Activated T-helper 1 cell treated with anti-CD3 and anti-CD28 coated beads, Interleukin-12 subunit alpha, Interleukin-12 subunit beta, Interleukin-2, Interleukin-4 antibody, amounts not matched to agents 30 ng/mL and 10 ng/mL and 1 ng/mL, durations not matched to agents 14 hours and 24 hours and 36 hours (primary cell): ENCODE measurements at regions of chr4 and their contacts with region 1.

Region 1: DNA sequence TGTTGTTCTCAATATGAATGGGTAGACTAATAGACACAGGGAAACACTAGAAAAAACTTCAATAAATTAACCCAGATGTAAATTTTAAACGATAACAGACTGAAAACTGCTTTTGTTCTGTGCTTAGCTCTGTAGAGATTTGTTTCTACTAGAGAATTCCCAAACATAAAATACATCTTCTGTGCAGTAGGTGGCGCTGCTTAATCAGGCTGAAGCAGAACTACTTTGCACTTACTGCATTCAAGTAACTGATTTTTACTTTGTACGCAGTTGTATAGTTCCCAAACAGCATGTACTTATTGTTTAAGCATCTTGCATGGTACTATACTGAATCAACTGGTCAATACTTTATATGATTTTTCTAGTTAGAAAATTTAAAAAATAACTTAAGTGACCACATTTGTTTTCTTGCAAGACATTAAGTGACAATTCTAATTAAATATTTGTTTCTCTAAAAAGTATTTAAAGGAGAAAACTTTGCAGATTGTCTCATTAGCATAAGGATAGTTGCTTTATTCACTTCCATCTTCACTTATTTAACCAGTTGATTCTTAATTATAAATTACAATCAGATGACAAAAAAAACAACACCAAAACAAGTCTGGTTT is 490.6 kb downstream of the IL15 start:
- DNase-seq: peak; percentile 27
- H3K4me3 Mint-ChIP-seq: no peak overlapping the region
- H3K27ac Mint-ChIP-seq: no peak overlapping the region
- H3K4me1 Mint-ChIP-seq: peaks cover 18% of the 10 kb centered on the region
- H3K27me3 Mint-ChIP-seq: no peaks in the 10 kb centered on the region

Region 2: GRCh38 chr4:140851032-140851636 is 1275.9 kb before region 1 on chr4:
- intact Hi-C with region 1: no loop called
- DNase-seq: peak; percentile 3
- H3K4me3 Mint-ChIP-seq: no peak overlapping the region
- H3K27ac Mint-ChIP-seq: no peak overlapping the region
- H3K4me1 Mint-ChIP-seq: no peaks in the 10 kb centered on the region
- H3K27me3 Mint-ChIP-seq: peaks cover 2% of the 10 kb centered on the region

Region 3: GRCh38 chr4:141307241-141307689 is 819.7 kb before region 1 on chr4:
- intact Hi-C with region 1: loop called (anchors 5 kb)
- DNase-seq: peak; percentile 49
- H3K4me3 Mint-ChIP-seq: no peak overlapping the region
- H3K27ac Mint-ChIP-seq: no peak overlapping the region
- H3K4me1 Mint-ChIP-seq: no peaks in the 10 kb centered on the region
- H3K27me3 Mint-ChIP-seq: peaks cover 2% of the 10 kb centered on the region

Region 4: DNA sequence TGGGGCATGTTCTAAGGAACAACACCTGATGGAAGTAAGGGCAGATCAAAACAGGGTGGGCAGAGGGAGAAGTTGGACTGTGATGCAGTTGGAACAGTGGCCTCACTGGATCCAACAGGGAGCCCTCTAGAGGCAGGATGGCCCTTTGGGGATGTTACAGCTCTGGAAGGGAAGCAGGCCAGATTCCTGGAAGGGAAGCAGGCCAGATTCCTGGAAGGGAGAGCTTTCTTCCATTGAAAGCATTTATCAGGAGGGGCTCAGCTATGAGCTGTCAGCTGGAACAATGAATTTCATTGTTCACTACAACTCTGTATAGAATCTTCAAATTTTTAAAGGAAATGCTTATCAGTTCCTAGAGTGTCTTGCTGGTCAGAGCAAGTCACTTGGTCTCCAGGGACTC is 472.9 kb before region 1 on chr4:
- intact Hi-C with region 1: no loop called
- DNase-seq: no peak
- H3K4me3 Mint-ChIP-seq: no peak overlapping the region
- H3K27ac Mint-ChIP-seq: no peak overlapping the region
- H3K4me1 Mint-ChIP-seq: no peaks in the 10 kb centered on the region
- H3K27me3 Mint-ChIP-seq: peaks cover 2% of the 10 kb centered on the region

Region 5: DNA sequence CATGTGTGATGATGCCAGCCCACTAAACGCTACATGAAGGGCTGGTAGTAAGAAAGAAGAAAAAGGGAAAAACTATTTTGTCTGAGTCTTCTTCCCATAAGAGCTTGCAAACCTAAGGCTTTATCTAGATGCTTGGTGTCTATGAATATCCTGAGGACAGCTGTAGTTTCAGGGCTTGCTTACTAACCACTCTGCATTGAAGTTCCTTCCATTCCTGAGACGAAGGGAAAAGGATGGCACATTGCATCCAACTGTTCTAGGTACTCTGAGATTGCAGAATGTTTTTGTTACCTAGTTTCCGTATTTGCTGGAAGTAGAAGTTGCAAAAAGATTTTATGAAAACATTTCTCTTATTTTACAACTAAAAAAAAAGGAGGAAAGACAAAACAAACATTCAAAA is 54.0 kb after region 1 on chr4:
- intact Hi-C with region 1: no loop called
- DNase-seq: no peak
- H3K4me3 Mint-ChIP-seq: no peak overlapping the region
- H3K27ac Mint-ChIP-seq: no peak overlapping the region
- H3K4me1 Mint-ChIP-seq: no peaks in the 10 kb centered on the region
- H3K27me3 Mint-ChIP-seq: no peaks in the 10 kb centered on the region

Region 6: GRCh38 chr4:142282870-142283431 is 156.0 kb after region 1 on chr4:
- intact Hi-C with region 1: loop called (anchors 5 kb)
- DNase-seq: no peak
- H3K4me3 Mint-ChIP-seq: no peak overlapping the region
- H3K27ac Mint-ChIP-seq: no peak overlapping the region
- H3K4me1 Mint-ChIP-seq: peaks cover 5% of the 10 kb centered on the region
- H3K27me3 Mint-ChIP-seq: no peaks in the 10 kb centered on the region

Region 7: DNA sequence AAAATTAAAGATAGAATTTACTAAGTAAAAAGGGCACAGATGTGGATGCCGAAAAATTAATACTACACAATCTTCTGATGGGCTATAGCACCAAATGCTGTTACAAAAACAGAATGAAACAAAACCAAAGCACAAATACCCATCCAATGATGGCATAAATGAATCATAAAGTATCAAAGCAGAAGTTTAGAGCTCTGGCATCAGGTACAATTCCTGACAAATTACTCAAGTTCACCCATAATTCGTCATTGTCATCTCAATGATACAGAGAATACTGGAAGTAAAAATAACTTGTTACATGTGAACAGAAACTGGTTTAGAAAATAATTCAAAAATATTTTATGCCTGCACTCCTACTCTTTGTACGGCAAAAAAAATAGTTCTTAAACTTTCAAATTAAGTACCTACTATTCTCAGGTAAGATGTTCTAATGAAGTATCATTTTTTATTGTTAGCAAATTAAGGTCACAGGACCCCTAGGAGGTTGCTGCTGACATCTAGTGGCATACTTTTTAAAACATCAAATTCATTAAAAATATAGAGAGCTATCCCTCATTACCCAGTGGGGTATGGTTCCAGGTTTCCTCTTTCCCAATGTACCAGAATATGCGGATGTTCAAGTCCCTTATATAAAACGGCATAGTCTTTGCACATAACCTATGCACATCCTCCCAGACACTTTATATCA is 593.0 kb after region 1 on chr4:
- intact Hi-C with region 1: loop called (anchors 1 kb)
- DNase-seq: no peak
- H3K4me3 Mint-ChIP-seq: no peak overlapping the region
- H3K27ac Mint-ChIP-seq: no peak overlapping the region
- H3K4me1 Mint-ChIP-seq: peaks cover 7% of the 10 kb centered on the region
- H3K27me3 Mint-ChIP-seq: no peaks in the 10 kb centered on the region

Region 8: DNA sequence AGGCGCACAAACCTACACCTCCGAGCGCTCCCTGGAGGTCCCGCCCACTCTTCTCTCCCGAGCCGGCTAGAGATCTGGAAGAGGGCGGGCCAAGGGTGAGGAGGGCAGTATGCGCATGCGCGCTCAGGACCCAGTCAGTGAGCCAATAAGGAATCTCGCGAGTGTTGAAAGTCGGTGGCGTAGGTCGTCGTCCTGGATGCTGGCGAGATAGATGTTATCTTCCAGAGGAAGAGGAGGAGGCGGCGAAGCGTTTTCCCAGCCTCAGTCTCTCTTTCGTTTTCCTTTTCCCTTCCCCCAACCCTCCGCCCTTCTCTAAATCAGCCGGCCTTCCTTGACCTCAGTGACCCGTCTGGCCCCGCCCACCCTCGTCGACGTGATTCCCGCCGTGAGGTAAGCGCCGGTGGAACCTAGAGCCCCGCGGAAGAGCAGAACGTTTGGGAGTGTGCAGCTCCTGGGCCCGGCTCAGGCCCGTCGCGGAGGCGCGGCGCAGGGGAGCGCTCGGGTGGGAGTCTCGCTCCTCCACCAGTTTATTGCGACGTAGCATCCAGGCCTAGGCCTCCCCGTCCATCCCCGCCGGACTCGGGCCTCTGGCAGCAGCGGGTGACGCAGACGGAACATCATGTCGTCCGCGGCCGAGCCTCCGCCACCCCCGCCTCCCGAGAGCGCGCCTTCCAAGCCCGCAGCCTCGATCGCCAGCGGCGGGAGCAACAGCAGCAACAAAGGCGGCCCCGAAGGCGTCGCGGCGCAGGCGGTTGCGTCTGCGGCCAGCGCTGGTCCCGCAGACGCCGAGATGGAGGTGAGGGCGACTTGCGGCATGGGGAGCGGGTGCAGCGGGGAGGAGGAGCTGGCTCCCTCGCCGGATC is 1386.5 kb after region 1 on chr4 and contains the start of gene SMARCA5:
- intact Hi-C with region 1: loop called (anchors 10 kb)
- DNase-seq: peak; percentile 95
- H3K4me3 Mint-ChIP-seq: peak within 1 kb of the TSS; percentile 94
- H3K27ac Mint-ChIP-seq: peak within 1 kb of the TSS; percentile 93
- H3K4me1 Mint-ChIP-seq: peaks cover 29% of the 10 kb centered on the region
- H3K27me3 Mint-ChIP-seq: peaks cover 10% of the 10 kb centered on the region
- total RNA-seq, gene SMARCA5: 59.9 and 60.7 TPM in 2 replicates